Calu3 (cell line): ENCODE measurements at regions of chr7 and their contacts with region 1.

Region 1: DNA sequence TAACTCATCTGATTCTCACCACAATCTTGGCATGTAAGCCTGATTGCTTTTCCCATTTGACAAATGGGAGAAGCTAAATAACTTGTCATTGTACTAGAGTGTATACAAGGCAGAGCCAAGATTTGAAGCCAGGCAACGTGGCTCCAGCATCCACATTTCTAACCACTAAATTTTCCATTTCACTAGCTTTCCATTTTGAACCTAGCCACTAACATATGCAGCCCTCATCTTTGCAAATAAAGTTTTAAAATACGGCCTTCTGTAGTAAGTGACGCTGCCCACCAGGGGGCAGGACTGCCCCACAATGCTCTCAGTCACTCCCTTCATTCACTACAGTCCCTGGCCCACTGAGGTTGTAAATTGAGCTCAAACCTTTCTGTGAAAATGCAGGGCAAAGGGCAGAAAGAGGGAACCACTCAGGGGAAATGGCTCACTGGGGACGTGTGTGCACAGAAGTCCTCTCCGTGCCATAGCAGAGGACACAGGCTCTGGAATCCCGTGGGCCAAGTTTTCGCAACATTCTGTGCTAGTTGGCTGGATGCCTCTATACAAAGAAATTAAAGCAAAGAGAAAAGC is 315.7 kb downstream of the TNS3 start:
- DNase-seq: peak; percentile 84
- H3K4me3 Mint-ChIP-seq: peak overlapping the region; percentile 4
- H3K27ac Mint-ChIP-seq: peak overlapping the region; percentile 65
- H3K4me1 Mint-ChIP-seq: peaks cover 13% of the 10 kb centered on the region
- H3K27me3 Mint-ChIP-seq: no peaks in the 10 kb centered on the region
- CTCF ChIP-seq: peak; percentile 99

Region 2: DNA sequence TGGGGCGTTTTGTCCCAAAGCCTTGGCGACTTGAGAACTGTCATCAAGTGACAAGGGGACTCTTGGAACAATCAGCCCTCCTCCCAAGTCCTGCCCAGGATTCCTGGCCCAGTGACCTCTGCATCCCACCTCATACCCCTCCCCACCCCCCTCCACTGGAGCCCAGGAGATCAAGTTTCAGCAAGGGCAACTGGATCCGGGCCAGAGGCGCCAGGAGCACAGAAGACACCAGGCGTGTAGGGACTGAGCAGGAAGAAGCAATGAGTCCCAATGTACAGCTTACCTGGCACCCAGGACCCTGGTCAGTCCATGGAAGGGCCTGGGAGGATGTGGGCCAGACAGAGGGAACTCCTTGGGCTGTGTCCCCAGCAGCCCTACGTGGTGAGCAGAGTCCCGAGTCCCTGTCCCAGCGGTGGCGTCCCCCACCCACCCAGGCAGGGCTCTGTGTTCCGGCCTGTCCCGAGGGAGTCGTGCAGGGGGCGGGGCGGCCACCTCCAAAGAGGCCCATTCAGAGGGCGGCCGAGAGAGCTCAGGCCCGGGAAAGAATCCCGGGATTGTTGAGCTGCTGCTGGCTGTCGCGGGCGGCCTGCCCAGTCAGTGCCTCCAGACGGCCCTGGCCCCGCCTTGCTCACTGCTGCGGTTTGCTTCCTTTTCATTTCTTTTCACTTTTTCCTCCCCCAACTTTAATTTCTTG is 61.6 kb after region 1 on chr7:
- CTCF ChIA-PET with region 1: interaction called, 13 read pairs
- intact Hi-C with region 1: no loop called
- DNase-seq: peak; percentile 87
- H3K4me3 Mint-ChIP-seq: peak overlapping the region; percentile 44
- H3K27ac Mint-ChIP-seq: peak overlapping the region; percentile 26
- H3K4me1 Mint-ChIP-seq: peaks cover 29% of the 10 kb centered on the region
- H3K27me3 Mint-ChIP-seq: no peaks in the 10 kb centered on the region
- CTCF ChIP-seq: no peak

Region 3: DNA sequence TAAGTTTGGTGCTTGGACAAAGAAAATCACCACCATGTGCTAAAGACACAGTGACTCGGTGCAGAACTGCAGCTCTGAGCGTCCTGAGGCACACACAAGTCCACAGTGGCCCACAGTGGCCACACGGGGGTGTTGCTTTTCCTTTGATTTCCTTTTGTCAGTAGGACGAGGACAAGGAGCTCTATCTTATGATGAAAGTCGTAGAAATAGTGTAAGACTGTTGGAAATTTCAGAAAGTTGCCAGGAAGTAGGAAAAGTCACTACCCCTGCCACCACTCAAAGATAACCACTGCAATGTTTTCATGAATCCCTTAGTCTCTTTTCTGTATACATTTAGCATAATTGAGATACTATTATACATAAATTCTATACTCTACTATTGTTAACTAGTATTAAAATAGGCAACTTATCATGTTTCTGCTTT is 169.7 kb after region 1 on chr7:
- CTCF ChIA-PET with region 1: interaction called, 33 read pairs
- intact Hi-C with region 1: loop called (anchors 5 kb)
- DNase-seq: peak; percentile 74
- H3K4me3 Mint-ChIP-seq: no peak overlapping the region
- H3K27ac Mint-ChIP-seq: peak overlapping the region; percentile 50
- H3K4me1 Mint-ChIP-seq: peaks cover 28% of the 10 kb centered on the region
- H3K27me3 Mint-ChIP-seq: no peaks in the 10 kb centered on the region
- CTCF ChIP-seq: peak; percentile 78

Region 4: DNA sequence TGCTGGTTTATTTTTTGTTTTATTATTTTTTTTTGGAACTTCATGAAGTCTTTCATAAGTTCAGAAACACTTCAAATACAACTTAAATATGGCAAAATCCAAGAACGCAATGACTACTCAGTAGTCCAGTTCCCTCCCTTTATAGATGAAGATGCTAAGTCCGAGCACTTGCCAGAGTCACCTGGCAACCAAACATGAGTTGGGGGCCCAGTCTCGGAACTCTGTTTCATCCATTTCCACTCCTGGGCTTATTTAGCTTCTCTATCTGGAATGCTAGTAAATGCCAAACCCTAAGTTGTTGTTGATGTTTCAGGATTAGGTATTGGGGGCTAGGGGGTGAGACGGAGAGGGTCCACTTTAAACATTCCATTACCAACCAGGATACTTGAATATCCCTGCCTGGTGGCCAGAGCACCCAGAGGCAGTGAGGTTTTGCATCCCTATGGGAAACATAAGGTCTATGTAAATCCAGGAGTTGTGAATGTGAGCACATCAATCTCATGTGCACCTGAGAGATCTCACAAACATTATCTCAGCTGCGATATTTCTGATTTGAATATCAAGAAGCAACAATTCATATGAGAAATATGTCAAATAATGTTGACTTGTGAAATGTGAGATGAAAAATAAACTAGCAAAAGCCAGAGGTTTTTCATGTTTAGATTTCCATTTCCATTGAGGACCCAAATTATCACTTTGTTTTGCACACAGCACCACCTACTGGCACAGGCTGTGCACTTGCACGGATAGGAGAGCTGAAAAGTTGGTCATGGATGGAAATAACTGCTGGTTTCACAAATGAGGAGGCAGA is 552.8 kb after region 1 on chr7:
- CTCF ChIA-PET with region 1: interaction called, 33 read pairs
- intact Hi-C with region 1: loop called (anchors 1 kb)
- DNase-seq: peak; percentile 90
- H3K4me3 Mint-ChIP-seq: no peak overlapping the region
- H3K27ac Mint-ChIP-seq: no peak overlapping the region
- H3K4me1 Mint-ChIP-seq: peaks cover 23% of the 10 kb centered on the region
- H3K27me3 Mint-ChIP-seq: no peaks in the 10 kb centered on the region
- CTCF ChIP-seq: peak; percentile 96

Region 5: GRCh38 chr7:47893247-47893646 is 627.0 kb after region 1 on chr7:
- CTCF ChIA-PET with region 1: no interaction called
- intact Hi-C with region 1: no loop called
- DNase-seq: peak; percentile 16
- H3K4me3 Mint-ChIP-seq: no peak overlapping the region
- H3K27ac Mint-ChIP-seq: no peak overlapping the region
- H3K4me1 Mint-ChIP-seq: no peaks in the 10 kb centered on the region
- H3K27me3 Mint-ChIP-seq: peaks cover 64% of the 10 kb centered on the region
- CTCF ChIP-seq: peak; percentile 38

Region 6: GRCh38 chr7:47945261-47946001 is 679.2 kb after region 1 on chr7:
- CTCF ChIA-PET with region 1: interaction called, 36 read pairs
- intact Hi-C with region 1: no loop called
- DNase-seq: peak; percentile 85
- H3K4me3 Mint-ChIP-seq: no peak overlapping the region
- H3K27ac Mint-ChIP-seq: no peak overlapping the region
- H3K4me1 Mint-ChIP-seq: peaks cover 13% of the 10 kb centered on the region
- H3K27me3 Mint-ChIP-seq: no peaks in the 10 kb centered on the region
- CTCF ChIP-seq: peak; percentile 76